Motor neuron (in vitro differentiated cells): ENCODE measurements at regions of chr3 and their contacts with region 1.

Region 1: DNA sequence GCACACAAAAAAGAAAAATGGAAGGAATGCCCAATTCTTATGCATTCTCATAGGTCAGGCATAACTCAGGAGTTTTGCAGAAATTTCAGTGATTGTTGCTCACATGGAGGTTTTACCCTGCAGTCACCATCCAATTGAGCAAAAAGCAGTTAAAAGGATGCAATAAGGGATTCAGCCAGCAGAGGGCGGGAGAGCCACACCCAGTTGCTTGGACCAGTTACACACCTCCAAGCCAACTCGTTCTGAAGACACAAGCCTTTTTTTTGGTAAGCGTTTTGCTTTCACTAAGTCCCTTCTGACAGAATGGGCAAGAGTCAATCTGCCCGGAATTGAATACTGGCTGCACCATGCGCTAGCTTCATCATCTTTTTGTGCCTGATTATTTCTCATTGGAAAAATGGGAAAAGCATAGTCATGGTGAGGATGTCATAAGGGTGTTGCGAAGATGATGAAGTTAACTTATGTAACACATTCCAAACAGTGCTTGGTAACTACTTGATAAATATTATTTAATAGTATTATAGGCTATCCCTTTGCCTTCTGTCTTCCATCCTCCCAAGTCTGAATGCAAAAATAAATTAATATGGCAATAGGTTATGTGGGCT is 154.4 kb upstream of the SGO1 start:
- ATAC-seq: peak; percentile 60 to 89 (median 78)
- H3K4me3 ChIP-seq: no peak overlapping the region
- H3K27ac ChIP-seq: no peak overlapping the region
- H3K4me1 ChIP-seq: no peaks in the 10 kb centered on the region

Region 2: DNA sequence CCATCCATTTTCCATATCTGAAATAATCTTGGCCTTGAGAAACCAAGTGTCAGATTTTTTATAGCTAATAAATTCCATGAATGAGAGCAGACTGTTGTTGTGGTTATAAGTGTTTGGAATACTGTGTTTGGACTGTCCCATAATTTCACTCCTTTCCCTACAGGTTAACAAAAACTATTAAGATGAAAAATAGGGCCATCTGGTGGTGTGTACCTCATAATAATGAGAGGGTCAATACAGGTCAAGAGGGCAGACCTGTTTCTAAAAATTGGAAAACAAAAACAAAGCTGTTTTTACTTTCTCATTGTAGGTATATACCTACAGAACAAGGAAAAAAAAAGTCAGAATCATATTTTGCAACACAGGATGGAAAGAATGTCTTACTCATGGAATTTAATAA is 399.4 kb after region 1 on chr3:
- in situ Hi-C with region 1: loop called in 1 of 9 experiments (anchors 25 kb)
- ATAC-seq: peak in 2 of 8 experiments; percentile 50 to 52
- H3K4me3 ChIP-seq: no peak overlapping the region
- H3K27ac ChIP-seq: no peak overlapping the region
- H3K4me1 ChIP-seq: peaks cover 8 to 35% of the 10 kb centered on the region in 2 donors

Region 3: GRCh38 chr3:22117751-22118346 is 1777.4 kb after region 1 on chr3:
- in situ Hi-C with region 1: loop called in 1 of 9 experiments (anchors 25 kb)
- ATAC-seq: no peak
- H3K4me3 ChIP-seq: no peak overlapping the region
- H3K27ac ChIP-seq: no peak overlapping the region
- H3K4me1 ChIP-seq: peaks cover 0 to 6% of the 10 kb centered on the region in 2 donors